Naive thymus-derived CD4-positive, alpha-beta T cell (primary cell): ENCODE measurements at regions of chr5 and their contacts with region 1.

Region 1: GRCh38 chr5:169302491-169303118 is 1.7 kb upstream of the SLIT3 start:
- DNase-seq: peak in 5 of 9 donors; percentile 3 to 58 (median 23)
- ATAC-seq: no peak
- H3K4me3 ChIP-seq: no peak overlapping the region
- H3K4me3 Mint-ChIP-seq: peak overlapping the region in 4 of 10 donors; percentile 10 to 58 (median 26)
- H3K27ac ChIP-seq: no peak overlapping the region
- H3K27ac Mint-ChIP-seq: no peak overlapping the region
- H3K4me1 ChIP-seq: no peaks in the 10 kb centered on the region
- H3K4me1 Mint-ChIP-seq: peaks cover 9 to 20% (median 14%) of the 10 kb centered on the region in 7 donors
- H3K27me3 ChIP-seq: no peaks in the 10 kb centered on the region
- H3K27me3 Mint-ChIP-seq: peaks cover 49 to 84% (median 62%) of the 10 kb centered on the region in 5 donors

Region 2: GRCh38 chr5:168030912-168031311 is 1271.7 kb before region 1 on chr5:
- CTCF ChIA-PET with region 1: no interaction called
- POLR2A ChIA-PET with region 1: no interaction called
- intact Hi-C with region 1: no loop called
- DNase-seq: no peak
- ATAC-seq: no peak
- H3K4me3 ChIP-seq: no peak overlapping the region
- H3K4me3 Mint-ChIP-seq: no peak overlapping the region
- H3K27ac ChIP-seq: no peak overlapping the region
- H3K27ac Mint-ChIP-seq: no peak overlapping the region
- H3K4me1 ChIP-seq: no peaks in the 10 kb centered on the region
- H3K4me1 Mint-ChIP-seq: no peaks in the 10 kb centered on the region
- H3K27me3 ChIP-seq: no peaks in the 10 kb centered on the region
- H3K27me3 Mint-ChIP-seq: peaks cover 0 to 25% (median 4%) of the 10 kb centered on the region in 5 donors

Region 3: DNA sequence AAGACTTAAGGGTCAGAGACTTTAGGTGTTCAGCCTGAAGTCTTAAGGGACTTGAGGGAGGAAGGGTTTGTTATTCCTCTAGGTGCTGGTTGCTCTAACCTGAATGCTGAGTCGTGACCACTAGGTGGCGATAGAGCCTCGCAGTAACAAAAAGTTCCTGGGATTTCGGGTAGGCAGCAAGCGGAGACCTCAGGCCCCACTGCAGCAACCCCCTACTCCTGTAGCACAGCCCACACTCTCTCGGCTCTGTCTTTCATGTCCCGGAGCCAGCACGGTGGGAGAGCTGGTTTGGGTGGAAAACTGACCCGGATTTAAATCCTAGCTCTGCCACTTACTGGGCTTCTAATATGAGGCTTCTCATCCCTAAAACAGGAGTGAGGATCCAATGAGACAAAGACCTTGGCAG is 623.1 kb before region 1 on chr5:
- CTCF ChIA-PET with region 1: no interaction called
- POLR2A ChIA-PET with region 1: no interaction called
- intact Hi-C with region 1: loop called in 1 of 2 experiments (anchors 1 kb)
- DNase-seq: peak; percentile 11 to 59 (median 47)
- ATAC-seq: peak; percentile 55
- H3K4me3 ChIP-seq: no peak overlapping the region
- H3K4me3 Mint-ChIP-seq: no peak overlapping the region
- H3K27ac ChIP-seq: no peak overlapping the region
- H3K27ac Mint-ChIP-seq: no peak overlapping the region
- H3K4me1 ChIP-seq: peaks cover 0 to 5% of the 10 kb centered on the region in 2 donors
- H3K4me1 Mint-ChIP-seq: peaks cover 6 to 20% (median 14%) of the 10 kb centered on the region in 7 donors
- H3K27me3 ChIP-seq: no peaks in the 10 kb centered on the region
- H3K27me3 Mint-ChIP-seq: peaks cover 0 to 6% (median 0%) of the 10 kb centered on the region in 5 donors

Region 4: DNA sequence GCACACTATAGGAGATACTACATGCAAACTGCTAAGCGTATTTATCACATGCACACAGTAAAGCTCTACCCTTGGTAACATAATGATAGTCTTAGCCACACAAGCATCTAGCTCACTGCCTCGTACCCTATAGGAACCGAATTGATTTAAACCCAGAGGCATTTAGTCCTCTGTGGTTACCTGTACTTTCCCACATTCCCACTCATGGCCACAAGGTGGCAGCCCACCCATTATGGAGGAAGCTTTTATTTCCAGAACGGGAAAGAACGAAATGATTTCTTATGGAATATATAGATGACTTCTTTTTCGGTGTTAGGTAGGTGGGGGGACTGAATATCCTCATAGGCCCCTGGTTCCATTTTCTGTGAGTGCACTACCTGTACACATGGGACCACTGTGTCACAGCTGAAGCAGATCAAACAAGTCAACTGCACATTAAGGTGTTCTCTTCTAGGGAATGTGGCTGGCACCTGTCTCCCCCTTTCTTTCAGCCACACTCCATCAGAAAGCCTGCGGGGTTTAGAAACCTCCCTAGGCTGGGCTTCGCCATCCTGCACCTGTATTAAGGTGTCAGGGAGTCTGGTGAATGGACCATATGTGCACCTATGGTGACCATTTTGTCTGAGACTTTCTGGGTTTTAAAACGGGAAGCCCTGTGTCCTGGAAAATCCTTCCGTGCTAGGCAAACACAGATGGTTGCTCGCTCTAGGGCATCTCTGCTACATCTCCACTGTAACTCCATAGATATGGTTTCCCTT is 314.9 kb before region 1 on chr5:
- CTCF ChIA-PET with region 1: no interaction called
- POLR2A ChIA-PET with region 1: no interaction called
- intact Hi-C with region 1: loop called in 1 of 2 experiments (anchors 2 kb)
- DNase-seq: peak in 7 of 9 donors; percentile 8 to 54 (median 13)
- ATAC-seq: no peak
- H3K4me3 ChIP-seq: no peak overlapping the region
- H3K4me3 Mint-ChIP-seq: no peak overlapping the region
- H3K27ac ChIP-seq: no peak overlapping the region
- H3K27ac Mint-ChIP-seq: no peak overlapping the region
- H3K4me1 ChIP-seq: peaks cover 0 to 4% of the 10 kb centered on the region in 2 donors
- H3K4me1 Mint-ChIP-seq: no peaks in the 10 kb centered on the region
- H3K27me3 ChIP-seq: peaks cover 0 to 3% of the 10 kb centered on the region in 2 donors
- H3K27me3 Mint-ChIP-seq: peaks cover 3 to 23% (median 16%) of the 10 kb centered on the region in 5 donors